ENCODE measurements at regions of chr9 and their contacts with region 1.

Region 1: DNA sequence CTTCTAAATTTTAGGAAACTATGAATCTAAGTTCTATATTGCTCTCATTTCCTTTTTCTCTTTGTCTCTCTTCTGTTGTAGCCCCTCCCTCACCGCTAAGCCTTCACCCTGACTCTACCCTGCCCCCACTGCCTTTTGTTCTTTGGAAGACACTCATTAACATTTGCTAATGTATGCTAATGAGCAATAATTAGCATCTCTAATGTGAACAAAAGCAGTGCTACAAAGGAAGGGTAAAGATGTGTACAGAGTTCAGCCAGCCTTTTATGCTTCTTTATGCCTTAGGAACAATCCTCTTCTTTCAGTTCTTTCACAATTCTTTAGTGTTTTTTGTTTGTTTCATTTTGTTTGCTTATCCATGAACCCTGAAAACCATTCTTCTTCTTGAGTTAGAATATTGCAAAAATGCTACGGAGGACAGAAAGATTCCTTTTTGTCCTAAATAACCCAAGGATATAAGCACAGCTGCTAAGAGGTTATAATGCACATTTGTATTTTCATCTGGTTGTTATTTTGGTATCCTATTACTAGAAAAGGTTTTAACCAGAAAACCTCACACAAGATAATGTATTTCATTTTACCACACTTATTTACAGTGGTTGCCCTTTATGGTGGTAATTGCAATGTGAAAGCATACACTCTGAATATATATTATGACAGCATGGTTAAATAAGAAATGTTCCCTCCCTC is 159.3 kb downstream of the TMC1 start:
- DNase-seq: peak in 1 of 10 donors; percentile 21

Region 2: GRCh38 chr9:72371151-72371550 is 309.6 kb before region 1 on chr9:
- intact Hi-C with region 1: loop called (anchors 10 kb)
- DNase-seq: no peak

Region 3: GRCh38 chr9:72564479-72565281 is 116.1 kb before region 1 on chr9:
- intact Hi-C with region 1: no loop called
- DNase-seq: no peak

Measured in posterior cingulate gyrus (tissue), 11 donors.